ENCODE measurements at regions of chr2 and their contacts with region 1.

Region 1: GRCh38 chr2:174771631-174772471 is 7.6 kb upstream of the CHRNA1 start:
- DNase-seq: peak; percentile 72 to 81
- ATAC-seq: peak; percentile 93 to 97 (median 94)
- H3K4me3 ChIP-seq: no peak overlapping the region
- H3K27ac ChIP-seq: no peak overlapping the region
- H3K4me1 ChIP-seq: peaks cover 6% of the 10 kb centered on the region
- H3K27me3 ChIP-seq: no peaks in the 10 kb centered on the region
- CTCF ChIP-seq: peak; percentile 78

Region 2: DNA sequence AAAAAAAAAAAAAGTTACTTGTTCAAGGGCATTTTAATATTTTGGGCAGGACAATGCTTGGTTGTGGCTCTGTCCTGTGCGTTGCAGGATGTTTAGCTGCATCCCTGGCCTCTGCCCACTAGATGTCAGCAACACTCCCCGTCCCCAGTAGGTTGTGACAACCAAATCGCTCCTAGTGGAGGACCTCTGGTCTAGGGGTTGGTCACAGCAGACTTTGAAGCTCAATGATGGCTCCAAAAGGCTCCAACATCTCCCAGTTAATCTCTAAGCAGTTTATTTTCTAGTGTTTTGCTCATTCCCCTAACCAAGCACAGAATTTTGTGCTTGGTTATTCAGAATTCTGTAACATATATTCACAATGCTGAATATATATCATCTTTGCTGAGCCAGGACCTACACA is 74.6 kb before region 1 on chr2:
- intact Hi-C with region 1: loop called in 1 of 2 experiments (anchors 5 kb)
- DNase-seq: no peak
- ATAC-seq: peak; percentile 63 to 87 (median 80)
- H3K4me3 ChIP-seq: no peak overlapping the region
- H3K27ac ChIP-seq: no peak overlapping the region
- H3K4me1 ChIP-seq: no peaks in the 10 kb centered on the region
- H3K27me3 ChIP-seq: peaks cover 0 to 7% (median 0%) of the 10 kb centered on the region in 3 donors
- CTCF ChIP-seq: peak; percentile 68

Region 3: DNA sequence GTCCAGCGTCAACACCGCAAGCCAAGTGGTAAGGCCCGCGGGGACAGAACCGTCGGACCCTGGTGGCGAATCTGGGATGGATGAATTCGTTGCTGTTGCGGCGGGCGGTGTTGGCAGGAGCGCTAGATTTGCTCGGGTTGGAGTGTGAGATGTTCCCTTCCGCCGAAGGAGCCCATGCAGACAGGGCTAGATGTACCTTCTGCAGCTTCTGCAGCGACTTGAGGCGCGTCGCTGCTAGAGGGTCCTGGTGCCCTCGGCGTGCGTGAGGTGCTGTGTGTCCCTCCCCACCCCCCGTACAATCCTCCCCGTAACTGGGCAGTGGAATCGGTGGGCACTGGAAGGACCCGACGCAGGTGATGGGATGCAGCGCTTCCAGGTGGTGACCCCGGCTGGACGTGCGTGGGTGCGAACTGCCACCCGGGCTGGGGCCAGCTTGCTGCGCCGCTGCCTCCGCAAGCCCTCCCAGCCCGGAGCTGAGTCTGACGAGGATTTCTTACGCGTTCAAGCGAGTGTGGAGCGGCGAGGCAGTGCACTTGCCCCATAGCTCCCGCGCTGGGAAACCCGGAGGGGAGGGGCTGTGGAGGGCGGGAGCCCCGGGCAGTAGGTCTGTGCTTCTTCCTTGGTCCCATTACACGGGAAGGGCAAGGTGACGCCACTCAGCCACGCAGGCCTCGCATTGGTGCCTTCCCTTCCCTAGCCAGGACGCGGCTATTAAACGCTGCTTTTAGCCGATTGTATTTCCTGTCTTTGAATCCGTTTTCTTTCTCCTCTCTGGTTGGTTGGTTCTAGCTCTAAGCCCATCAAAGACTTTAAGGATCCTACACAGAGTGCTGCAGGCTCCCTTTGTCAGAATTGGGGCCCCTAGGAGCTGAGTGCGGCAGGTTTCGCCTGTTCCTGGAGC is 41.8 kb before region 1 on chr2:
- intact Hi-C with region 1: no loop called
- DNase-seq: peak in 1 of 2 donors; percentile 24
- ATAC-seq: peak in 3 of 4 donors; percentile 53 to 62 (median 56)
- H3K4me3 ChIP-seq: peak overlapping the region; percentile 59
- H3K27ac ChIP-seq: no peak overlapping the region
- H3K4me1 ChIP-seq: peaks cover 4% of the 10 kb centered on the region
- H3K27me3 ChIP-seq: peaks cover 0 to 39% (median 9%) of the 10 kb centered on the region in 3 donors
- CTCF ChIP-seq: no peak

Region 4: GRCh38 chr2:174985630-174986029 is 213.8 kb after region 1 on chr2:
- intact Hi-C with region 1: loop called in 1 of 2 experiments (anchors 2 kb)
- DNase-seq: no peak
- ATAC-seq: no peak
- H3K4me3 ChIP-seq: no peak overlapping the region
- H3K27ac ChIP-seq: no peak overlapping the region
- H3K4me1 ChIP-seq: no peaks in the 10 kb centered on the region
- H3K27me3 ChIP-seq: no peaks in the 10 kb centered on the region
- CTCF ChIP-seq: peak; percentile 52

Region 5: DNA sequence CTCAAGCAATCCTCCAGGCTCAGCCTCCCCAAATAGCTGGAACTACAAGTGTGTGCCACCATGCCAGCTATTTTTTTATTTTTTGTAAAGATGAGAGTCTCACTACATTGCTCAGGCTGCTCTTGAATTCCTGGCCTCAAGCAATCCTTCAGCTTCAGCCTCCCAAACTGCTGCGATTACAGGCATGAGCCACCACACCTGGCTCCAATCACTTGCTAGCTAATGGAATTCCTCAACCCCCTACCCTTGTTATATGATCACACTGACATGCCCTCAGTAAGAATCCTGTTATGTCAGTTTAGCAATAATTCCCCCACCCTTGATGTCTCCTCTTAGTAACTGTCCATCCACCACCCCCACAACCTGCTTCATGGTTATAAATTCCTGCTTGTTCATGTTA is 221.0 kb after region 1 on chr2:
- intact Hi-C with region 1: loop called in 1 of 2 experiments (anchors 2 kb)
- DNase-seq: no peak
- ATAC-seq: no peak
- H3K4me3 ChIP-seq: no peak overlapping the region
- H3K27ac ChIP-seq: no peak overlapping the region
- H3K4me1 ChIP-seq: no peaks in the 10 kb centered on the region
- H3K27me3 ChIP-seq: no peaks in the 10 kb centered on the region
- CTCF ChIP-seq: no peak

Region 6: GRCh38 chr2:175147186-175147585 is 375.3 kb after region 1 on chr2:
- intact Hi-C with region 1: no loop called
- DNase-seq: no peak
- ATAC-seq: no peak
- H3K4me3 ChIP-seq: no peak overlapping the region
- H3K27ac ChIP-seq: no peak overlapping the region
- H3K4me1 ChIP-seq: peaks cover 27% of the 10 kb centered on the region
- H3K27me3 ChIP-seq: no peaks in the 10 kb centered on the region
- CTCF ChIP-seq: no peak